IMR-90 (cell line): ENCODE measurements at regions of chr7 and their contacts with region 1.

Region 1: DNA sequence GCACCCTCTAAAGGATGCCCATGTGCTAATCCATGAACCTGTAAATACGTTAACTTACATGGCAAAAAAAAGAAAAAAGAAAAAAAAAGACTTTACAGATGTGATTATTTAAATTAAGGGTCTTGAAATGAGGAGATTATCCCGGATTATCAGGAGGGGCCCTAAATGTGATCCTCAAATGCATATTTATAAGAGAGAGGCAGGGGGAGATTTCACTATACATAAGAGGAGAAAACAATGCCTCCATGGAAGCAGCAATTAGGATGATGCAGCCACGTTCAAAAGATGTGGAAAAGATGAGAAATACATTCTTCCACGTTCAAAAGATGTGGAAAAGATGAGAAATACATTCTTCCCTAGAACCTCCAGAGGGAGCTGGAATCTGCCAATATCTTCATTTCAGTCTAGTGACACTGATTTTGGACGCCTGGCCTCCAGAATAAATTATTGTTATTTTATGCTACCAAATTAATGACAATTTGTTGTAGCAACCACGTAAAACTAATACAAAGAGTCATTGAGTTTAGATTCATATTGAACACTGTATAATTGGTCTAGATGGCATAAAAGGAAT is 328.4 kb upstream of the GNAI1 start:
- DNase-seq: peak; percentile 42
- ATAC-seq: peak; percentile 60
- H3K4me3 ChIP-seq: no peak overlapping the region
- H3K27ac ChIP-seq: no peak overlapping the region
- H3K4me1 ChIP-seq: no peaks in the 10 kb centered on the region; the same call in 1 of the 2 replicates
- H3K27me3 ChIP-seq: no peaks in the 10 kb centered on the region
- CTCF ChIP-seq: peak; percentile 60
- POLR2A ChIP-seq: no peak
- RAD21 ChIP-seq: peak; percentile 73

Region 2: DNA sequence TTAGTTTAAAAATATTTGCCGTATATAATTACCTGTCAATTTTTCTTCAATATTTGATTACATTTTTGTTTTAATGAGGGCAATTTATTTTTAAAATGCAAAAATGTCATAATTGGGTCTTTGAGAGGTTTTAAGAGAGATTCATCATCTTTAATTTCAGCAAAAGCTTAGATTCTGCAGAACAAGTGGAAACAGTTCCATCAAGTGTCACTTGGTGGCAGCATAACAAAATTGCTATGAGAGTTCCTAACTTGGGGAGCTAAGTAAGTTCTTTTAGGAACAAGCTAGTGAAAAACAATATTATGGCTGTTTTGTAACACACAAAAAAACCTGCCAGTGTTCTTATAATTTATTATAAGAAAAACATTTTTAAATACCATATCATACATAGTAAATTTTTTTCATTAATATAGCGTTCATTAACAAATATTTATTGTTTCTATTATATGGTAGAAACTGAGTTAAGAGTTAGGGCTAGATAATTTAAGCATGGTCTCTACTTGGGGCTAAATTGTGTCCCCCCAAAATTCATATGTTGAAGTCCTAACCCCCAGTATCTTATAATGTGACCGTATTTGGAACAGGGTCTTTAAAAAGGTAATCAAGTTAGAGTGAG is 508.0 kb before region 1 on chr7:
- CTCF ChIA-PET with region 1: no interaction called
- POLR2A ChIA-PET with region 1: no interaction called
- dilution Hi-C with region 1: no loop called
- in situ Hi-C with region 1: no loop called
- intact Hi-C with region 1: loop called (anchors 10 kb)
- DNase-seq: peak; percentile 79
- ATAC-seq: peak; percentile 65
- H3K4me3 ChIP-seq: no peak overlapping the region
- H3K27ac ChIP-seq: no peak overlapping the region
- H3K4me1 ChIP-seq: peaks cover 3% of the 10 kb centered on the region; the same call in 1 of the 2 replicates
- H3K27me3 ChIP-seq: no peaks in the 10 kb centered on the region
- CTCF ChIP-seq: peak; percentile 70
- POLR2A ChIP-seq: no peak
- RAD21 ChIP-seq: peak; percentile 73

Region 3: GRCh38 chr7:79968077-79968648 is 161.9 kb after region 1 on chr7:
- CTCF ChIA-PET with region 1: no interaction called
- POLR2A ChIA-PET with region 1: no interaction called
- dilution Hi-C with region 1: no loop called
- in situ Hi-C with region 1: no loop called
- intact Hi-C with region 1: no loop called
- DNase-seq: no peak
- ATAC-seq: no peak
- H3K4me3 ChIP-seq: no peak overlapping the region
- H3K27ac ChIP-seq: no peak overlapping the region
- H3K4me1 ChIP-seq: peaks cover 4% of the 10 kb centered on the region
- H3K27me3 ChIP-seq: no peaks in the 10 kb centered on the region
- CTCF ChIP-seq: no peak
- POLR2A ChIP-seq: no peak
- RAD21 ChIP-seq: no peak

Region 4: DNA sequence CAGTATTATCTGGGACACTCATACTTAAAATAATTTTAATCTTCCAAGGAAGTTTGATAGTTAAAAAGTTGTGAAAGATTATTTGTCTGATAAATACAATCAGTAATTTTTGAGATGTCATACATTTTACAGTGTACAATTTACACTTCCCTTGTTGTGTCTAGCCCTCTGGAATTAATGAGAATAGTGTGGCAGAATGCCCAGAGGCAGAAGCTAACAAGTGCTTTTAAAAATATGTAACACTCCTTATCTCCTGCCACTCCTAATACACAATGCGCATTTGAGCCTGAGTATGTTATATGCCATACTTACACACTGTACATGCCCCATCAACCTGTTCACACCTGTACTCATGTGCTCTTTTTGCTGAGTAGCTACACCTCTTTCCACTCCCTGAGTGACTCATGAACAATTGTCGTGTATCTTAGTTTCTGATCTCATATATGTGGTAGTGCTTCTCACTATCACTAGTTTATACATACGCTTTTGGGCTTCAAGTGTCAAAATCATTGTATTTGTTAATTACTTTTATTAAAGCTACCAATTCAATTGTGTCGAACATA is 221.4 kb after region 1 on chr7:
- CTCF ChIA-PET with region 1: interaction called, 3 read pairs
- POLR2A ChIA-PET with region 1: no interaction called
- dilution Hi-C with region 1: no loop called
- in situ Hi-C with region 1: loop called (anchors 10 kb)
- intact Hi-C with region 1: no loop called
- DNase-seq: no peak
- ATAC-seq: no peak
- H3K4me3 ChIP-seq: no peak overlapping the region
- H3K27ac ChIP-seq: no peak overlapping the region
- H3K4me1 ChIP-seq: no peaks in the 10 kb centered on the region
- H3K27me3 ChIP-seq: no peaks in the 10 kb centered on the region
- CTCF ChIP-seq: no peak
- POLR2A ChIP-seq: no peak
- RAD21 ChIP-seq: no peak

Region 5: GRCh38 chr7:80533287-80533686 is 727.0 kb after region 1 on chr7:
- CTCF ChIA-PET with region 1: no interaction called
- POLR2A ChIA-PET with region 1: no interaction called
- dilution Hi-C with region 1: no loop called
- in situ Hi-C with region 1: no loop called
- intact Hi-C with region 1: no loop called
- DNase-seq: peak; percentile 44
- ATAC-seq: no peak
- H3K4me3 ChIP-seq: no peak overlapping the region
- H3K27ac ChIP-seq: no peak overlapping the region
- H3K4me1 ChIP-seq: peaks cover 4% of the 10 kb centered on the region; the same call in 1 of the 2 replicates
- H3K27me3 ChIP-seq: no peaks in the 10 kb centered on the region
- CTCF ChIP-seq: no peak
- POLR2A ChIP-seq: no peak
- RAD21 ChIP-seq: no peak